Natural killer cell (primary cell): ENCODE measurements at regions of chr6 and their contacts with region 1.

Region 1: DNA sequence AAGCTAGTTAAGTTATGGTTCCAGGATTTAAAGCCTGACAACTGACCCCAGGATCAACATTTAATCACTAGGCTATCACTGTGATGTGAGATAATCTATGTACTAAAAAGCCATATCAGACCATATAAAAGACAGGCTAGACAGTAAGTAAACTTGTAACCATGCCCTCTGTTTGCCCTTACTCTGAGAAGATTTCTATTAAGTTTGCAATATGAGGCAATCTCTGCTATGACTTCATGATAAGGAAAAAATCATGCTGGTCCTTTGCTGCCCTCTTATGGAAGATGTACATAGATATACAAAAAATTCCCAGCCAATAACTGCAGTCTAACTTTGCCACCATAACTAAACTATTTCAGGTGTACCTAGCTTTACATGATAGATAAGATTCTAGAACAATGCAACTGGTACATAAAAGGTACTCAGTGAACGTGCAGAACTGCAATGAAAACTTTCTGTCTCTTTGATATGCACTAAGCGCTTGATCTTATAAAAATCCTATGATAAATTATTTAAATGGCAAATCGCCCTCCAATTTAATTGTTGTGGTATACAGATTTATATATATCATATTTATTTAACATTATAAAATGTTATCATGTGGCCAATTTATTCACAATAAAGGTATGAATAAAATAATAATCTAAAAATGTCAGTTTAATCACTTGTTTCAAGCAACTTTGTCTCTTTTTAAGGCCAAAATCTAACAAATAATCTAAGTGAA is 70.5 kb downstream of the FAM217A start:
- DNase-seq: peak in 1 of 2 donors; percentile 78
- ATAC-seq: peak; percentile 63 to 88 (median 70)
- H3K4me3 ChIP-seq: no peak overlapping the region
- H3K4me3 Mint-ChIP-seq: no peak overlapping the region
- H3K27ac ChIP-seq: no peak overlapping the region
- H3K27ac Mint-ChIP-seq: peak overlapping the region; percentile 31 to 71
- H3K4me1 ChIP-seq: peaks cover 7% of the 10 kb centered on the region
- H3K4me1 Mint-ChIP-seq: peaks cover 29 to 38% of the 10 kb centered on the region in 2 donors
- H3K27me3 ChIP-seq: no peaks in the 10 kb centered on the region
- H3K27me3 Mint-ChIP-seq: no peaks in the 10 kb centered on the region
- CTCF ChIP-seq: peak; percentile 69

Region 2: GRCh38 chr6:3848925-3849605 is 159.4 kb before region 1 on chr6 and contains the start of gene FAM50B:
- intact Hi-C with region 1: loop called (anchors 1 kb)
- DNase-seq: peak; percentile 85 to 93
- ATAC-seq: peak; percentile 90 to 95 (median 91)
- H3K4me3 ChIP-seq: peak within 1 kb of the TSS; percentile 54
- H3K4me3 Mint-ChIP-seq: peak within 1 kb of the TSS; percentile 88
- H3K27ac ChIP-seq: peak within 1 kb of the TSS; percentile 36
- H3K27ac Mint-ChIP-seq: peak within 1 kb of the TSS; percentile 73 to 83
- H3K4me1 ChIP-seq: peaks cover 14% of the 10 kb centered on the region
- H3K4me1 Mint-ChIP-seq: peaks cover 16 to 21% of the 10 kb centered on the region in 2 donors
- H3K27me3 ChIP-seq: no peaks in the 10 kb centered on the region
- H3K27me3 Mint-ChIP-seq: peaks cover 3 to 7% of the 10 kb centered on the region in 2 donors
- CTCF ChIP-seq: peak; percentile 84
- total RNA-seq, gene FAM50B: 1.9 to 4.7 (median 1.9) TPM

Region 3: GRCh38 chr6:4030669-4031068 is 22.2 kb after region 1 on chr6:
- intact Hi-C with region 1: no loop called
- DNase-seq: peak in 1 of 2 donors; percentile 55
- ATAC-seq: peak in 2 of 3 donors; percentile 37 to 44
- H3K4me3 ChIP-seq: no peak overlapping the region
- H3K4me3 Mint-ChIP-seq: no peak overlapping the region
- H3K27ac ChIP-seq: no peak overlapping the region
- H3K27ac Mint-ChIP-seq: peak overlapping the region; percentile 9 to 56
- H3K4me1 ChIP-seq: peaks cover 6% of the 10 kb centered on the region
- H3K4me1 Mint-ChIP-seq: peaks cover 67 to 80% of the 10 kb centered on the region in 2 donors
- H3K27me3 ChIP-seq: no peaks in the 10 kb centered on the region
- H3K27me3 Mint-ChIP-seq: no peaks in the 10 kb centered on the region
- CTCF ChIP-seq: no peak